Endothelial cell of umbilical vein (primary cell): ENCODE measurements at regions of chr5 and their contacts with region 1.

Region 1: GRCh38 chr5:93800988-93801811 is 59.8 kb upstream of the POU5F2 start:
- DNase-seq: peak; percentile 68
- H3K4me3 ChIP-seq: no peak overlapping the region
- H3K27ac ChIP-seq: no peak overlapping the region
- H3K4me1 ChIP-seq: peaks cover 2% of the 10 kb centered on the region
- H3K27me3 ChIP-seq: no peaks in the 10 kb centered on the region
- CTCF ChIP-seq: peak; percentile 41
- POLR2A ChIP-seq: no peak

Region 2: GRCh38 chr5:92518318-92518904 is 1282.8 kb before region 1 on chr5:
- CTCF ChIA-PET with region 1: interaction called, 22 read pairs
- POLR2A ChIA-PET with region 1: no interaction called
- dilution Hi-C with region 1: no loop called
- intact Hi-C with region 1: loop called (anchors 5 kb)
- DNase-seq: peak; percentile 50
- H3K4me3 ChIP-seq: no peak overlapping the region
- H3K27ac ChIP-seq: no peak overlapping the region
- H3K4me1 ChIP-seq: no peaks in the 10 kb centered on the region
- H3K27me3 ChIP-seq: no peaks in the 10 kb centered on the region
- CTCF ChIP-seq: peak; percentile 47 to 69
- POLR2A ChIP-seq: no peak

Region 3: GRCh38 chr5:93092349-93093105 is 708.7 kb before region 1 on chr5:
- CTCF ChIA-PET with region 1: interaction called, 27 read pairs
- POLR2A ChIA-PET with region 1: no interaction called
- dilution Hi-C with region 1: no loop called
- intact Hi-C with region 1: loop called (anchors 1 kb)
- DNase-seq: peak; percentile 82
- H3K4me3 ChIP-seq: no peak overlapping the region
- H3K27ac ChIP-seq: no peak overlapping the region
- H3K4me1 ChIP-seq: no peaks in the 10 kb centered on the region
- H3K27me3 ChIP-seq: no peaks in the 10 kb centered on the region
- CTCF ChIP-seq: peak; percentile 13 to 33
- POLR2A ChIP-seq: no peak

Region 4: GRCh38 chr5:93596676-93597461 is 204.3 kb before region 1 on chr5:
- CTCF ChIA-PET with region 1: interaction called, 25 read pairs
- POLR2A ChIA-PET with region 1: no interaction called
- dilution Hi-C with region 1: no loop called
- intact Hi-C with region 1: no loop called
- DNase-seq: no peak
- H3K4me3 ChIP-seq: no peak overlapping the region
- H3K27ac ChIP-seq: no peak overlapping the region
- H3K4me1 ChIP-seq: no peaks in the 10 kb centered on the region
- H3K27me3 ChIP-seq: peaks cover 20 to 25% of the 10 kb centered on the region in 2 experiments
- CTCF ChIP-seq: peak in 1 of 2 donors; percentile 12
- POLR2A ChIP-seq: no peak

Region 5: DNA sequence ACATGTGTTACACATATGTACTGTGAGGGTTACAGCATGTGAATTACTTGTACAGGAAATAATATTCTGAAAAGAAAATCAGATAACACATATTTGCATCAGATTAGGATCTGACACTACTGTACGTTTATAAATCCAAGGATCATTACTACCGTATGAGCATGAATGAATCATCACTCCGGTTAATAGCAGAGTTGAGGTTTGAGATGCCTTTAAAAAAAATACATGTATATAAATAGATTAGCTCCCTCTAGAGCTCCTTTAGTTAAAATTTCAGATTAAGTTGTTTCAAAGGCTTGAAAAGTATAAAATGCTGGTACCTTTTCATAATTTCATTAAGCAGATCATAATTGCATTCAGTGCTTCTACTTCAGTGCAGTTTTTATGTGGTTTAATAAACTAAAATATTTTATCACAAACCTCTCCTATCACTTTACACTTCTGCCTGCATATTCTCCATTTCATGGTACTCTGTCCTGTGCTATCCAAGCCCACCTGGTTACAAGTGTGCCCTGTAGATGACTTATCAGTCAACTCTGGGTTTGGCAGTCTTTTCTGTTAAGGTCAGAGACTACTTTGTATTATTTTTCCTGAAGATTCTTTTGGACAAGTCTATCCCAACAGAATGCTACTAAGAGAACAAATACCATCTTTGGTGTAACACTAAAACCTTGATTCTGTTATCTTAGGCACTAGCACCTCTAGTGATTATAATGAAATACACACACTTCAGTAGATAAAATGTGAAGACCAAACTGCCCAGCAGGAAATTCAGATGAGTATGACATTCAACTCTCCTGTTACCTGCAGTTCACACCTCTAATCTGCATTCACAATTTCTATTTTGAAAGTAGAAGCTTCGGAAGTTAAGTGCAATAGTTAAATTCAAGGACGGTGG is 11.8 kb before region 1 on chr5:
- CTCF ChIA-PET with region 1: interaction called, 57 read pairs
- POLR2A ChIA-PET with region 1: no interaction called
- dilution Hi-C with region 1: no loop called
- intact Hi-C with region 1: no loop called
- DNase-seq: peak; percentile 56
- H3K4me3 ChIP-seq: no peak overlapping the region
- H3K27ac ChIP-seq: no peak overlapping the region
- H3K4me1 ChIP-seq: peaks cover 10% of the 10 kb centered on the region
- H3K27me3 ChIP-seq: no peaks in the 10 kb centered on the region
- CTCF ChIP-seq: no peak
- POLR2A ChIP-seq: no peak